H1 (cell line): ENCODE measurements at regions of chr17 and their contacts with region 1.

Region 1: GRCh38 chr17:29219378-29220047 is 27.1 kb upstream of the CRYBA1 start:
- DNase-seq: peak; percentile 43 to 94
- H3K4me3 ChIP-seq: no peak overlapping the region
- H3K27ac ChIP-seq: no peak overlapping the region
- H3K4me1 ChIP-seq: no peaks in the 10 kb centered on the region
- H3K27me3 ChIP-seq: no peaks in the 10 kb centered on the region
- CTCF ChIP-seq: peak; percentile 79 to 97 (median 93)
- EP300 ChIP-seq: no peak
- POLR2A ChIP-seq: no peak
- RAD21 ChIP-seq: peak; percentile 75 to 83

Region 2: GRCh38 chr17:29133146-29133713 is 86.3 kb before region 1 on chr17:
- CTCF ChIA-PET with region 1: interaction called, 333 read pairs
- POLR2A ChIA-PET with region 1: no interaction called
- DNase-seq: no peak
- H3K4me3 ChIP-seq: peak overlapping the region in 3 of 4 experiments; percentile 13 to 34 (median 18); a peak in 5 of 8 replicates
- H3K27ac ChIP-seq: peak overlapping the region; percentile 77
- H3K4me1 ChIP-seq: peaks cover 12 to 22% (median 16%) of the 10 kb centered on the region in 4 experiments
- H3K27me3 ChIP-seq: no peaks in the 10 kb centered on the region
- CTCF ChIP-seq: no peak
- EP300 ChIP-seq: no peak
- POLR2A ChIP-seq: no peak
- RAD21 ChIP-seq: no peak

Region 3: GRCh38 chr17:29162738-29163341 is 56.7 kb before region 1 on chr17:
- CTCF ChIA-PET with region 1: interaction called, 29 read pairs
- POLR2A ChIA-PET with region 1: no interaction called
- DNase-seq: no peak
- H3K4me3 ChIP-seq: no peak overlapping the region
- H3K27ac ChIP-seq: no peak overlapping the region
- H3K4me1 ChIP-seq: peaks cover 0 to 2% (median 1%) of the 10 kb centered on the region in 4 experiments; a peak in 2 of 7 replicates
- H3K27me3 ChIP-seq: no peaks in the 10 kb centered on the region
- CTCF ChIP-seq: no peak
- EP300 ChIP-seq: no peak
- POLR2A ChIP-seq: no peak
- RAD21 ChIP-seq: no peak

Region 4: GRCh38 chr17:29195465-29196081 is 23.9 kb before region 1 on chr17:
- CTCF ChIA-PET with region 1: interaction called, 66 read pairs
- POLR2A ChIA-PET with region 1: no interaction called
- DNase-seq: no peak
- H3K4me3 ChIP-seq: no peak overlapping the region
- H3K27ac ChIP-seq: no peak overlapping the region
- H3K4me1 ChIP-seq: peaks cover 0 to 3% (median 0%) of the 10 kb centered on the region in 4 experiments; a peak in 1 of 7 replicates
- H3K27me3 ChIP-seq: no peaks in the 10 kb centered on the region
- CTCF ChIP-seq: no peak
- EP300 ChIP-seq: no peak
- POLR2A ChIP-seq: no peak
- RAD21 ChIP-seq: no peak

Region 5: GRCh38 chr17:29233301-29233700 is 13.8 kb after region 1 on chr17:
- CTCF ChIA-PET with region 1: interaction called, 18 read pairs
- POLR2A ChIA-PET with region 1: no interaction called
- DNase-seq: no peak
- H3K4me3 ChIP-seq: no peak overlapping the region
- H3K27ac ChIP-seq: no peak overlapping the region
- H3K4me1 ChIP-seq: no peaks in the 10 kb centered on the region
- H3K27me3 ChIP-seq: no peaks in the 10 kb centered on the region
- CTCF ChIP-seq: no peak
- EP300 ChIP-seq: no peak
- POLR2A ChIP-seq: no peak
- RAD21 ChIP-seq: no peak